CD8-positive, alpha-beta T cell (primary cell): ENCODE measurements at regions of chr3 and their contacts with region 1.

Region 1: DNA sequence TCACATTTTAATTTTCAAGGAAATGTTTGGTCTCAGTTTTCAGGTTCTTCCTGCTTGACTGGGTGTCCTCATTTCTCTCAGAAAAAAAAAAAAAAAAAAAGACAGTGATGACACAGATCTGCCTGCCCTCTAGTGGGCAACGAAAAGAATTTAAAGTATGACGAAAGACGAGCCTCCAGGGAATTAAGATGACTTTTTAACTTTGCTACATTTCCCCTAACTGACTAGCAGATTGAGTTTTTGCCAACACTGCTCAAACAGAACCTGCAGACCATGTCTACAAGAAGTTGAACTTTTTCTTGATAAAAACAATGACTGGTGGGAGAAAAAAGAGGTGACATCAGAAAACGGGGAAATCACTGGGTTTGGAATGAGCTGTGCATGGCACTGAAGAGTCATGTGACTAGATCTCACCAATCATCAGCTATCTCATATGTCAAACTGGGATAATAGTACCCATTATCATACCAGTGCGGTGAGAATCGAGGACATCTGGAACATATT is 40.8 kb downstream of the EOMES start:
- DNase-seq: peak in 6 of 9 experiments; percentile 22 to 86 (median 44)
- ATAC-seq: peak; percentile 92
- H3K4me3 ChIP-seq: no peak overlapping the region
- H3K4me3 Mint-ChIP-seq: peak overlapping the region; percentile 63
- H3K27ac ChIP-seq: no peak overlapping the region
- H3K27ac Mint-ChIP-seq: no peak overlapping the region
- H3K4me1 ChIP-seq: peaks cover 4% of the 10 kb centered on the region
- H3K4me1 Mint-ChIP-seq: peaks cover 8% of the 10 kb centered on the region
- H3K27me3 ChIP-seq: no peaks in the 10 kb centered on the region
- H3K27me3 Mint-ChIP-seq: peaks cover 5% of the 10 kb centered on the region
- CTCF ChIP-seq: peak; percentile 82

Region 2: DNA sequence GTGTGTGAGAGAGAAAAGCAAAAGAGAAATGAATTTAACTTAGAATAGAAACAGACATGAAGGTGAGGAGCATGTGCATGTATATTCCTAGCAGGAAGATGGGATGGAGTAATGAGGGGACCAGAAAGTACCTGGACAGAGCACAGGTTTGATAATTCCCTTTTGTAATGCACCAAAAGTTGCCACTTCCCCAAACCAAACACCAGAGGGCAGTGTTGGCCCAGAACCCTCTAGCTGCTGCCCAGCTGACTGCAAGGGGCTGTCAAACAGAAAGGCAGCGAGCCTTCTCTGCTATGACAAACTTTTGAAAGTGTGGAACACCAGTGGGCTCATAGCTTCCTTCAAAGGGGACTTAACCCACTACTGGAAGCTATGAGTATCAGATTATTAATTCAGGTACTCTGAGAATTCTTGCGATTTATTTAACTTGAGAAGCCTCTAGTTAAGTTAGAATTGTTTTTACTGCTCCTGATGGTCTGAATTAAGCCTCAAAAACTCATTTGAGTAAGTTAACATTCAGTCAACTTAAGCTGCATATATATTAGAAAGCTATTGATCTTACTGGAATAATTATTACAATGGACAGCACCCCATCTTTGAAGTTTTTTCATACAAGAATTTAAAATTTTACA is 547.0 kb before region 1 on chr3:
- CTCF ChIA-PET with region 1: interaction called, 5 read pairs
- POLR2A ChIA-PET with region 1: no interaction called
- intact Hi-C with region 1: loop called in 1 of 2 experiments (anchors 2 kb)
- DNase-seq: peak; percentile 5 to 77 (median 61)
- ATAC-seq: peak; percentile 78
- H3K4me3 ChIP-seq: no peak overlapping the region
- H3K4me3 Mint-ChIP-seq: no peak overlapping the region
- H3K27ac ChIP-seq: no peak overlapping the region
- H3K27ac Mint-ChIP-seq: no peak overlapping the region
- H3K4me1 ChIP-seq: no peaks in the 10 kb centered on the region
- H3K4me1 Mint-ChIP-seq: no peaks in the 10 kb centered on the region
- H3K27me3 ChIP-seq: no peaks in the 10 kb centered on the region
- H3K27me3 Mint-ChIP-seq: peaks cover 2% of the 10 kb centered on the region
- CTCF ChIP-seq: peak; percentile 91

Region 3: GRCh38 chr3:27312044-27312668 is 369.1 kb before region 1 on chr3:
- CTCF ChIA-PET with region 1: interaction called, 55 read pairs
- POLR2A ChIA-PET with region 1: no interaction called
- intact Hi-C with region 1: loop called (anchors 1 kb)
- DNase-seq: peak in 2 of 9 experiments; percentile 65 to 68
- ATAC-seq: peak; percentile 73
- H3K4me3 ChIP-seq: no peak overlapping the region
- H3K4me3 Mint-ChIP-seq: no peak overlapping the region
- H3K27ac ChIP-seq: no peak overlapping the region
- H3K27ac Mint-ChIP-seq: no peak overlapping the region
- H3K4me1 ChIP-seq: no peaks in the 10 kb centered on the region
- H3K4me1 Mint-ChIP-seq: peaks cover 2% of the 10 kb centered on the region
- H3K27me3 ChIP-seq: no peaks in the 10 kb centered on the region
- H3K27me3 Mint-ChIP-seq: peaks cover 2% of the 10 kb centered on the region
- CTCF ChIP-seq: peak; percentile 68

Region 4: GRCh38 chr3:27357665-27358258 is 323.5 kb before region 1 on chr3:
- CTCF ChIA-PET with region 1: interaction called, 10 read pairs
- POLR2A ChIA-PET with region 1: no interaction called
- intact Hi-C with region 1: loop called (anchors 1 kb)
- DNase-seq: peak; percentile 11 to 77 (median 54)
- ATAC-seq: peak; percentile 87
- H3K4me3 ChIP-seq: no peak overlapping the region
- H3K4me3 Mint-ChIP-seq: no peak overlapping the region
- H3K27ac ChIP-seq: no peak overlapping the region
- H3K27ac Mint-ChIP-seq: no peak overlapping the region
- H3K4me1 ChIP-seq: peaks cover 13% of the 10 kb centered on the region
- H3K4me1 Mint-ChIP-seq: peaks cover 27% of the 10 kb centered on the region
- H3K27me3 ChIP-seq: no peaks in the 10 kb centered on the region
- H3K27me3 Mint-ChIP-seq: no peaks in the 10 kb centered on the region
- CTCF ChIP-seq: no peak

Region 5: DNA sequence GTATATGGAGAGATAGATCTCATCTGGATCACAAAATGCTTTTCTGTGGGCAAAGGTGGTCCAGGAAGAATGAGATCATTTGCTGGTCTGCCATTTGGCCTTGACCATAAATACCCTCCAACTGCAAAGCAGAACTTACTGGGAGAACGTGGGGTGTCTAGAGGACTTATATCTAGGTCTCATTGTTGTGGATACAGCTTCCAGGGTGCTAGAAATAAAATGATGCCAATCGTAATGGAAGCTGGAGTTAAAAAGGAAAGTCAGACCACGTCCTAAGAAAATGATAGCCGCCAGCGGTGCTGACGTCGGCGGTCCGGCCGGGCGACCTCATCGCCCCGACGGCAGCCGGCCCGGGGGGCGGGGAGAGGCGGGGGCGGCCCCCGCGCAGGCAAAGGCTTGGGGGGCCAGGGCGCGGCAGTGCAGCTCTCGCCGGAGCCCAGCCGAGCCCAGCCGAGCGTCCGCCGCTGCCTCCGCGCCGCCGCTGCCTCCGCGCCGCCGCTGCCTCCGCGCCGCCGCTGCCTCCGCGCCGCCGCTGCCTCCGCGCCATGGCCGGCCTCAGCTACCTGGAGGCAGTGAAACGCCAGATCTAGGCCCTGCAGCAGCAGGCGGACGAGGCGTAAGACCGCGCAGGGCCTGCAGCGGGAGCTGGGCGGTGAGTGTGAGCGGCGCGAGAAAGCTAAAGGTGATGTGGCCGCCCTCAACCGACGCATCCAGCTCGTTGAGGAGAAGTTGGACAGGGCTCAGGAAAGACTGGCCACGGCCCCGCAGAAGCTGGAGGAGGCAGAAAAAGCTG is 48.7 kb before region 1 on chr3:
- CTCF ChIA-PET with region 1: interaction called, 11 read pairs
- POLR2A ChIA-PET with region 1: no interaction called
- intact Hi-C with region 1: no loop called
- DNase-seq: peak; percentile 12 to 75 (median 47)
- ATAC-seq: peak; percentile 81
- H3K4me3 ChIP-seq: peak overlapping the region; percentile 65 to 71
- H3K4me3 Mint-ChIP-seq: peak overlapping the region; percentile 95
- H3K27ac ChIP-seq: peak overlapping the region; percentile 54 to 73
- H3K27ac Mint-ChIP-seq: peak overlapping the region; percentile 92
- H3K4me1 ChIP-seq: peaks cover 20% of the 10 kb centered on the region
- H3K4me1 Mint-ChIP-seq: peaks cover 27% of the 10 kb centered on the region
- H3K27me3 ChIP-seq: no peaks in the 10 kb centered on the region
- H3K27me3 Mint-ChIP-seq: no peaks in the 10 kb centered on the region
- CTCF ChIP-seq: no peak

Region 6: DNA sequence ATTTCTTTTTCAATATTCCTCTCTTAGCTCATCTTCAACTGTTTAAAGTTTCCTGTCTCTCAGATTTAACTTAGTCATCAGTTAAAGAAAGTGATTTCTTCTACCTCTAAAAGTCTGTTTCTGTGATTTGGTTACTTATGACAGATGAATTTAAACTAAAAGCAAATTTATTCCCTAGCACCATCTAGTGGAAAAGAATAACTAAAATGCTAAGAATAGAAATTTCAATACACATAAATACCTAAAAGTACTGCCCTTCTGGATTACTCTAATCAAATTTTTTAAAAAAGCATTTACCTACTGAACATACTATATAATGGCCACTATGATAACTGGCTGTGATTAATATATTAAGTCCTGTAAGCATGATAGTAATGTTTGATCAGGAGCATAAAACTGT is 653.3 kb after region 1 on chr3:
- CTCF ChIA-PET with region 1: interaction called, 10 read pairs
- POLR2A ChIA-PET with region 1: no interaction called
- intact Hi-C with region 1: no loop called
- DNase-seq: peak in 1 of 9 experiments; percentile 27
- ATAC-seq: no peak
- H3K4me3 ChIP-seq: no peak overlapping the region
- H3K4me3 Mint-ChIP-seq: no peak overlapping the region
- H3K27ac ChIP-seq: no peak overlapping the region
- H3K27ac Mint-ChIP-seq: no peak overlapping the region
- H3K4me1 ChIP-seq: peaks cover 7% of the 10 kb centered on the region
- H3K4me1 Mint-ChIP-seq: peaks cover 12% of the 10 kb centered on the region
- H3K27me3 ChIP-seq: no peaks in the 10 kb centered on the region
- H3K27me3 Mint-ChIP-seq: no peaks in the 10 kb centered on the region
- CTCF ChIP-seq: peak; percentile 42